Astrocyte of the cerebellum (primary cell): ENCODE measurements at regions of chr1 and their contacts with region 1.

Region 1: DNA sequence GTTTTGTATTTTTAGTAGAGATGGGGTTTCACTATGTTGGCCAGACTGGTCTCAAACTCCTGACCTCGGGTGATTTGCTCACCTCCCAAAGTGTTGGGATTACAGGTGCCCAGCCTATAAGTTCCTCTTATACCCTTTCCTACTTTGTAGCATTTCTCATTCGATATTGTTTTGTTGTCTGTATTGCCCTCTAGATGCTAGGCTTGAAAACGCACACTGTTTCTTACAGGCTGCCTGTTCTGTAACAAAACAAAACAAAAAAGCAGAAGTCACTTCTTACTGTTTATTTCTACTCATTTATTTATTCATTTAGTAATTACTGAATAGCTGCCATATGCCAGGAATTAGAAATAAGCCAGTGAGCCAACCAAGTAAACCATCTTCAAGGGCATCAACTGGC is 136.9 kb upstream of the BMP8A start:
- DNase-seq: no peak
- H3K4me3 ChIP-seq: no peak overlapping the region
- CTCF ChIP-seq: peak; percentile 11

Region 2: DNA sequence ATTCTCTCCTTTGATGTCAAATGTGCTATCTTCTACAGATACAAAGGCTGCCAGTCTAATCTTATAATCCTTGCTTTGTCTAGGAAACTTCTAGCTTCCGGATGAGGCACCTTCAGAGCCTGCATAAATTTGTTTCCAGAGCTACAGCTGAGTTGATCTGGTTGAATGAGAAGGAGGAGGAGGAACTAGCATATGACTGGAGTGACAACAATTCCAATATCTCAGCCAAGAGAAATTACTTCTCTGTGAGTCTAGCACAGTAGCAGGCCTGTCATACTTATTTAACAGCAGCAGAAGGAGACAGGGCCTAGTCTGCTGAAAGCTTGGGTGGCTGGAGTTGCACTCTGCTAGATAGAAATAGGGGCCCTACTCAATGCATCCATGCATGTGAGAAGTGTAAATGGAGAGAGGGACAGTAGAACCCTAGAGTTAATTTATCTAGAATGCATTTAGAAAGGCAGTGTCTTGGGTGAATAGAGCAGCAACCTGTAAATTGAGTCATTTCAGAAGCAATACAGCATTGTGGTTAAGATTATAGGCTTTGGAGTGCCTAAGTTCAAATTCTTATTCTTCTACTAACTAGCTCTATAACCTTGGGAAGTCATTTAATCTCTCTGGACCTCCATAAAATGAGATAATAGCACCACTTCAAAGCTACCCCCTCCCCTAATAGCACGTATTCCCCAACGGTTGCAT is 61.0 kb before region 1 on chr1:
- in situ Hi-C with region 1: no loop called
- DNase-seq: no peak
- H3K4me3 ChIP-seq: no peak overlapping the region
- CTCF ChIP-seq: no peak

Region 3: DNA sequence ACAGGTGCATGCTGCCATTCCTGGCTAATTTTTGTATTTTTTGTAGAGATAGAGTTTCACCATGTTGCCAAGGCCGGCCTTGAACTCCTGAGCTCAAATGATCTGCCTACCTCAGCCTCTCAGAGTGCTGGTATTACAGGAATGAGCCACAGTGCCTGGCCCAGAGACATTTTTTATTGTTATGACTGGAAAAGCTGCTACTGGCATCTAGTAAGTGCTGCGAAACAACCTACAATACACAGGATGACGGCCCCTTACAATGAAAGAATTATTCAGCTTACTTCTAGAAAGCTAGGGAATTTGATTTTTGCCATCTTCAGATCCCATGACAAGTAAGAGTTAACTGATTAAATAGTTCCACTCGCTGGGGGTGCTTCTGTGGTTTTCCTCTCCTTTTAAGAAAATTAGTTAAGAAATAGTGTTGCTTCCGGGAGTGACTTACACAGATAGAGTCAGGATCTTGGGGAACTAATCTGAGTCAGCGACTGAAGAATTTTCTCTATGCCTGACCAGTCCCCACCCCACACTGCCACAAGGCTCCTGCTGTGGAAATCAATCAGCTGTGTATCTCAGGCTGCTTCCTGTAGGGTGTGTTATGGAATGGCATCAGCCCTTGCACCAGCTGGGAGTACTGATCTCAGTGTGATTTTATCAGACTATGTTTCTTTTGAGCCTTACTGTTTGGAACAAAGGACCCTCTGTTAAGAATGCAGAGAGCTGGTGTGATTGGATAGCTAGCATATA is 43.9 kb after region 1 on chr1:
- in situ Hi-C with region 1: no loop called
- DNase-seq: peak; percentile 95
- H3K4me3 ChIP-seq: no peak overlapping the region
- CTCF ChIP-seq: no peak

Region 4: GRCh38 chr1:39458991-39459390 is 104.4 kb after region 1 on chr1:
- in situ Hi-C with region 1: loop called (anchors 5 kb)
- DNase-seq: no peak
- H3K4me3 ChIP-seq: no peak overlapping the region
- CTCF ChIP-seq: no peak